Activated CD8-positive, alpha-beta T cell treated with anti-CD3 and anti-CD28 coated beads for 36 hours (primary cell): ENCODE measurements at regions of chr3 and their contacts with region 1.

Region 1: GRCh38 chr3:129052675-129053074 is 7.9 kb upstream of the GP9 start:
- DNase-seq: no peak
- ATAC-seq: no peak
- H3K4me3 Mint-ChIP-seq: no peak overlapping the region
- H3K27ac Mint-ChIP-seq: no peak overlapping the region
- H3K4me1 Mint-ChIP-seq: peaks cover 7% of the 10 kb centered on the region
- H3K27me3 Mint-ChIP-seq: no peaks in the 10 kb centered on the region
- CTCF ChIP-seq: no peak

Region 2: GRCh38 chr3:128993461-128994173 is 59.1 kb before region 1 on chr3 and contains the start of gene CFAP92:
- CTCF ChIA-PET with region 1: interaction called, 15 read pairs
- POLR2A ChIA-PET with region 1: no interaction called
- intact Hi-C with region 1: no loop called
- DNase-seq: peak; percentile 93
- ATAC-seq: peak; percentile 98
- H3K4me3 Mint-ChIP-seq: peak within 1 kb of the TSS; percentile 63
- H3K27ac Mint-ChIP-seq: no peak within 1 kb of the TSS
- H3K4me1 Mint-ChIP-seq: peaks cover 30% of the 10 kb centered on the region
- H3K27me3 Mint-ChIP-seq: no peaks in the 10 kb centered on the region
- CTCF ChIP-seq: no peak
- total RNA-seq, gene CFAP92: 0.38 to 0.83 TPM

Region 3: GRCh38 chr3:129016356-129016719 is 36.3 kb before region 1 on chr3:
- CTCF ChIA-PET with region 1: interaction called, 43 read pairs
- POLR2A ChIA-PET with region 1: interaction called, 5 read pairs
- intact Hi-C with region 1: no loop called
- DNase-seq: peak; percentile 82
- ATAC-seq: peak; percentile 85
- H3K4me3 Mint-ChIP-seq: peak overlapping the region; percentile 71
- H3K27ac Mint-ChIP-seq: peak overlapping the region; percentile 97
- H3K4me1 Mint-ChIP-seq: peaks cover 31% of the 10 kb centered on the region
- H3K27me3 Mint-ChIP-seq: no peaks in the 10 kb centered on the region
- CTCF ChIP-seq: peak; percentile 34

Region 4: DNA sequence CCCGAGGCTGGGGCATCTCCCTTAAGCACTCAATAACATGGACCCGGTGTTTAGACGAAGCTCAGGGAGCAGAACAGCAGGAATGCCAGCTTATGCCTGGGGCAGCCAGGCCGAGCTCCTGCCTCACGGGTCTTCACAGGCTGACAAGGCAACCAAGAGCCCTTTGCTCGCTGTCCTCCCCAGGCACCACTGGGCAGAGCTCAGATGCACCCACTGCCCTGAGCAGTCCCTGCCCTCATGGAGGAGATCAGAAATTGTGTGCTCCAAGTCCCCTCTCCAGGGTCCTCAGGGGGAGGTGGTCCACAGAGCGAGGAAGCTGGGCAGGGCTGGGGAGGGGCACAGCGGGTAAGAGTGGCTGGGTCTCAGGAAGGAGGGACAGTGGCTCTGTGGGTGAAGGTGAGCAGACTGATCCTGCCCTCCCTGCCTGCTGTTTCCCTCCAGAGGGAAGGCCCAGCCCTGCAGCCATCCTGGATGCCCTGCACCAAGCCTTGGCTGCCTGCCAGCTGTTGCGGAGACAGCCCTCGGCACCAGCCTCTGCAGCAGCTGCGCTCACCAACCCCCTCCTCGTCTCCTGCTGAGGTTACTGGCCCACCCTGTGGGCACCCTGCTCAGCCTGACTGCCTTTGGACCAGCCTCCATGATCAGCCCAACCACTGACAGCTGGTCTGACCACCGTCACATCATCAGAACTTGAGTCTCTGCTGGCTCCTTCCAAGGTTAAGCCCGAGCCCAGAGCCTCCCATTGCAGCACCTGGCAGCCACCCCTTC is 13.2 kb before region 1 on chr3:
- CTCF ChIA-PET with region 1: interaction called, 36 read pairs
- POLR2A ChIA-PET with region 1: interaction called, 3 read pairs
- intact Hi-C with region 1: no loop called
- DNase-seq: no peak
- ATAC-seq: no peak
- H3K4me3 Mint-ChIP-seq: no peak overlapping the region
- H3K27ac Mint-ChIP-seq: no peak overlapping the region
- H3K4me1 Mint-ChIP-seq: peaks cover 15% of the 10 kb centered on the region
- H3K27me3 Mint-ChIP-seq: peaks cover 10% of the 10 kb centered on the region
- CTCF ChIP-seq: no peak

Region 5: GRCh38 chr3:129095285-129095684 is 42.6 kb after region 1 on chr3:
- CTCF ChIA-PET with region 1: interaction called, 20 read pairs
- POLR2A ChIA-PET with region 1: interaction called, 3 read pairs
- intact Hi-C with region 1: no loop called
- DNase-seq: no peak
- ATAC-seq: no peak
- H3K4me3 Mint-ChIP-seq: no peak overlapping the region
- H3K27ac Mint-ChIP-seq: no peak overlapping the region
- H3K4me1 Mint-ChIP-seq: peaks cover 31% of the 10 kb centered on the region
- H3K27me3 Mint-ChIP-seq: no peaks in the 10 kb centered on the region
- CTCF ChIP-seq: no peak

Region 6: DNA sequence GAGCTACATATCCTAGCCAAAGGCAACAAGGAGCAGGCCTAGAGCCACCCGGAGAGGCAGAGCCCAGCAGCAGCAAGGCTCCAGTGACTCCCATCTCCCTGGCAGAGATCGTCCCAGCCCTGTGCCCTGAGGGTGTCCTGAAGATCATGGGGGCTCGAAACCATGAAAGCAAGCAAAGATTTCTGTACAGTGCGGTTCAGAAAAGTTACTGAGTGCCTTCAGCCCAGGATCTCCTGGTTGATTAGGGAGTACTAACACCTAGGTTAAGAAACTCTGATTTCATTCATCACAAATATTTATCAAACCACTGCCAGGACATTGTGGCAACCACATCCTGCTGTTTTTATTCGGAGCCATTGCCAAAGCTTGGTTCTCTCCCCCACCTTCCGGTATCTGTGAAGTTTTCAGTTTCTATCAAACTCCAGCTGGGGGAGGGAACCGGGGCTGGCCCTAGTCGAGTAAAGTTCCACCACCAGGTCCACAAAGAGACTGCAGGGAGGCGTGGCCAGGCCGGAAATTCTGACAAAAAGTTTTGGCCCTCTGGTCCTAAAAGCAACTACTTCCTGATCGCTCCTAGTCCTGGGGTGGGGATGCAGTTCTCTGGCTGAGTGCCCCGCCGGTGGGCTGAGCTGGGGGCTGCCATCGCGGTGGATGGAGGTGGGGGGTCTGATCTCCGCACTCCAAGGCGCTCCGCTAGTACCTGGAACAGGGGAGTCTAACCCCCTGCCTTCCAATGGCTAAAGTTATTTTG is 67.8 kb after region 1 on chr3:
- CTCF ChIA-PET with region 1: interaction called, 44 read pairs
- POLR2A ChIA-PET with region 1: interaction called, 40 read pairs
- intact Hi-C with region 1: loop called (anchors 10 kb)
- DNase-seq: peak; percentile 98
- ATAC-seq: peak; percentile 63
- H3K4me3 Mint-ChIP-seq: peak overlapping the region; percentile 88
- H3K27ac Mint-ChIP-seq: peak overlapping the region; percentile 90
- H3K4me1 Mint-ChIP-seq: peaks cover 45% of the 10 kb centered on the region
- H3K27me3 Mint-ChIP-seq: no peaks in the 10 kb centered on the region
- CTCF ChIP-seq: no peak

Region 7: GRCh38 chr3:129249276-129250065 is 196.8 kb after region 1 on chr3 and contains the start of gene COPG1:
- CTCF ChIA-PET with region 1: interaction called, 53 read pairs
- POLR2A ChIA-PET with region 1: no interaction called
- intact Hi-C with region 1: loop called (anchors 2 kb)
- DNase-seq: peak; percentile 89
- ATAC-seq: peak; percentile 86
- H3K4me3 Mint-ChIP-seq: peak within 1 kb of the TSS; percentile 95
- H3K27ac Mint-ChIP-seq: peak within 1 kb of the TSS; percentile 96
- H3K4me1 Mint-ChIP-seq: peaks cover 38% of the 10 kb centered on the region
- H3K27me3 Mint-ChIP-seq: no peaks in the 10 kb centered on the region
- CTCF ChIP-seq: no peak
- total RNA-seq, gene COPG1: 114 to 118 TPM